Transverse colon (tissue), 4 donors: ENCODE measurements at regions of chrX and their contacts with region 1.

Region 1: GRCh38 chrX:18549643-18550042 is 122.3 kb downstream of the RS1 start:
- DNase-seq: no peak
- H3K4me3 ChIP-seq: no peak overlapping the region
- H3K27ac ChIP-seq: no peak overlapping the region
- H3K4me1 ChIP-seq: no peaks in the 10 kb centered on the region
- H3K27me3 ChIP-seq: no peaks in the 10 kb centered on the region
- CTCF ChIP-seq: no peak
- EP300 ChIP-seq: no peak
- POLR2A ChIP-seq: no peak

Region 2: DNA sequence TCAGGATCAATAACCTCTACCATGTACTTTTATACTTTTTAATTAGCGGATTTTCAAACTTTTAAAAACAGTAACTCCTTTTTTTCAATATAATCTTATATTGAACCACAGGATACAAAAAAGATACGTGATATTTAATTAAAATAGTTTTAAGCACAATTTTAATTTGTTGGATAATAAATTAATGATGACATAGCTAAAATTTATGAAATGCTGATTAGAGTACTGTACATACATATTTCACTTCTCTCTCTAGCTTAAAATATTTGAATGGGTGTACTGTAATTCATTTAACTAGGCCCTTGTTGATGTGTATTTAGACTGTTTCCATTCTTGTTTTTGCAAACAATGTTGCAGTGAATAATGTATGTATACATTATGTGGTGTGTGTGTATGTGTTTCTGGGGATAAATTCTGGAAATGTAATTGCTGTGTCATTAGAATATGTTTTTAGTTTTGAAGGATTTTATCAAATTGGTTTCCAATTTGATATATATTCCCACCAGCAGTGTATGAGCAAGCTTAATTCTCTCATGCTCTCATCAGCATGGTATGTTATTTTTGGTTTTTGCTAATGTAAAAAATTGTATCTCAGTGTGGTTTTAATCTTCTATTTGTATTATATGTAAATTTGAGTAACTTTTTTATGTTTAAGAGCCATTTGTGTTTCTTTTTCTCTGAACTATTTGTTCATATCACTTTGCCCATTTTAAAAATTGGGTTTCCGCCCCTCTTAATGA is 57.9 kb before region 1 on chrX:
- in situ Hi-C with region 1: no loop called
- intact Hi-C with region 1: loop called (anchors 1 kb)
- DNase-seq: no peak
- H3K4me3 ChIP-seq: no peak overlapping the region
- H3K27ac ChIP-seq: no peak overlapping the region
- H3K4me1 ChIP-seq: no peaks in the 10 kb centered on the region
- H3K27me3 ChIP-seq: no peaks in the 10 kb centered on the region
- CTCF ChIP-seq: no peak
- EP300 ChIP-seq: no peak
- POLR2A ChIP-seq: no peak

Region 3: DNA sequence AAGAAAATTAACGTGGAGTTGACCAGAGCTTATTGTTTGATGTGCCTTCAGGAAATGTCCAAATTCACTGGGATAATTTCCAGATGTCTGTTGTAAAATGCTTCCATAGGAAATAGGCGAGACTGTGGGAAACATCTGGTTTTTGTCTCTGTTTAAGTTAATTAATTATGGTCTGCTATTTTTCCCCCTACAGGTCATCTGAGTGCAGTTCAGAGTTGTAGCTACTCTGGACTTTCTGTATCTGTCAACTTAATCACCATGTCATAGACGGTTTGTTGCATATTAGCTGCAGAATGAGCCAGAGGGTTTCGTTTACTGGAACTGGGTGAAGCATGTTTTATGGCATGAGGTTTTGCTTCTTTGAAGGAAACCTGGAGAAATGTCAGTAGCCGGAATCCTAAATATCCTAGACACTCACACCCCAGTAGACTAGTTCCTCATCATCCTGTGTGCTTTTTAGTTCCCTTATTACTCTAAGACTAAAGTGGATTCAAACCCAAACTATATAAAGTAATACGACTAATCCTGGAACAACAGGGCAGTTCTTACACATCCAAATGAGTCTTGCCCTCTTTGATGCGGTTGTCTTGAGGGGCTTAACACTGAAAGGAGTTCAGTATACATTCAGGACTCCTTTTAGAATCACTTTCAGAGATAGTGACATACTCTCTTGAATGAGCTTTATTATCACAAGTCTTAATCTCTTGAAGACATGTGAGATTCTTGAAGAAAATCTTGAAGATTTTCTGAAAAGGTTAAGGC is 220.3 kb after region 1 on chrX:
- in situ Hi-C with region 1: no loop called
- intact Hi-C with region 1: no loop called
- DNase-seq: no peak
- H3K4me3 ChIP-seq: no peak overlapping the region
- H3K27ac ChIP-seq: no peak overlapping the region
- H3K4me1 ChIP-seq: no peaks in the 10 kb centered on the region
- H3K27me3 ChIP-seq: no peaks in the 10 kb centered on the region
- CTCF ChIP-seq: peak in 1 of 5 experiments; percentile 7
- EP300 ChIP-seq: no peak
- POLR2A ChIP-seq: no peak